SK-N-SH (cell line): ENCODE measurements at regions of chr19 and their contacts with region 1.

Region 1: DNA sequence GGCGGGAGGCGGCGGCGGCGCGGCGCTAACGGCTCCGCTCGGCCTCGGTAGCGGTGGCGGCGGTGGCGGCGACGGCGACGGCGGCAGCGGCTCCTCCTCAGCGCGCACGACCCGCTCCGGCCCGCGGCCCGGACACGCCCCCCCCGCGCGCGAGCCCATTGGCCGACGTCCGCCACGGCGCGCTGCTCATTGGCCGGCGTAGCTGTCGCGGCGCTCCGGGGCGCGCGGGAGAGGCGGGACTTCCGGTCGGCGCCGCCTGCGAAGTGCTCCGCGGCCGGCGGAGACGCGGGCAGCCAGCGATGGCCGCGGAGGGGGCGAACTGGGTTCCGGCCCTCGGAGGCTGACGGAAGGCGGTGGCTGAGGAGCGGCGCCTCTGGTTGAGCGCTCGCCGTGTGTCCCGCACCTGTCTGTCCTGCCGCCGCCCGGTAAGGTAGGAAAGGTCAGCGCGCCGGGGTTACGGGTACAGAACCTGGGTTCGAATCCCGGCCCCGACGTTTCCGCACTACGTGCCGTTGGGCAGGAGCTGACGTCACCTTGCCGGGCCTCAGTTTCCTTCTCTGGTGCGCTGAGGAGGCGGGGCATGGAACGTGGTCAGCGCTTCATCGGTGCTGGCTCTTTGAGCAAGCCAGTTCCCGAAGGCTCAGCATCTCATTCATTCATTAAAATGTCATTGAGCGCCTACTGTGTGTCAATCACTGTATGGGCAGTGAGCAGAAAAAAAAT is at the start of gene ELAVL1:
- DNase-seq: peak; percentile 98
- H3K4me3 ChIP-seq: peak within 1 kb of the TSS; percentile 71 to 90
- H3K27ac ChIP-seq: peak within 1 kb of the TSS; percentile 66 to 73
- H3K4me1 ChIP-seq: peaks cover 5 to 23% of the 10 kb centered on the region in 2 experiments; a peak in 2 of 4 replicates
- H3K27me3 ChIP-seq: no peaks in the 10 kb centered on the region
- CTCF ChIP-seq: no peak
- EP300 ChIP-seq: no peak
- RAD21 ChIP-seq: no peak
- polyA plus RNA-seq, gene ELAVL1: 41.7 and 49.6 TPM in 2 replicates

Region 2: GRCh38 chr19:7888145-7888825 is 117.4 kb before region 1 on chr19 and contains the start of gene LRRC8E:
- CTCF ChIA-PET with region 1: no interaction called
- POLR2A ChIA-PET with region 1: no interaction called
- DNase-seq: peak; percentile 24
- H3K4me3 ChIP-seq: no peak within 1 kb of the TSS
- H3K27ac ChIP-seq: no peak within 1 kb of the TSS
- H3K4me1 ChIP-seq: no peaks in the 10 kb centered on the region
- H3K27me3 ChIP-seq: no peaks in the 10 kb centered on the region; the same call in 1 of the 2 replicates
- CTCF ChIP-seq: no peak
- EP300 ChIP-seq: no peak
- RAD21 ChIP-seq: no peak
- polyA plus RNA-seq, gene LRRC8E: 0.02 and 0.23 TPM in 2 replicates

Region 3: GRCh38 chr19:7961921-7962626 is 43.6 kb before region 1 on chr19:
- CTCF ChIA-PET with region 1: interaction called, 11 read pairs
- POLR2A ChIA-PET with region 1: no interaction called
- DNase-seq: no peak
- H3K4me3 ChIP-seq: no peak overlapping the region
- H3K27ac ChIP-seq: no peak overlapping the region
- H3K4me1 ChIP-seq: no peaks in the 10 kb centered on the region
- H3K27me3 ChIP-seq: no peaks in the 10 kb centered on the region
- CTCF ChIP-seq: no peak
- EP300 ChIP-seq: no peak
- RAD21 ChIP-seq: no peak

Region 4: DNA sequence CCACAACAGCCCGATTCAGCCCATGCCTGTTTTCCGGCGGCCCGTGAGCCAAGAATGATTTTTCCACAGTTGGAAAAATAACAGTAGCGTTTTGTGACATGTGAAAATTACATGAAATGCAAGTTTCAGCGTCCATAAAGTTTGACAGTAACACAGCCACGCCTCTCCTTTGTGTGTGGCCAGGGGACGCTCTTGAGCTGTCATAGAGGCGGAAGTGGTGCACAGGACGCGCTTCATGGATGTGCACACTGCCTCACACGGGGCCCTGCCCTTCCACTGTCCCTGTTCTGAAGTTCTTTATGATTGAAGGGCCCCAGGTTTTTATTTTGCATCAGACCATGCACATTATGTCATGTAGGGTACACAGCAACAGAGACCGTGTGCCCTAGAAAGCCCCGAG is 12.1 kb after region 1 on chr19:
- CTCF ChIA-PET with region 1: interaction called, 18 read pairs
- POLR2A ChIA-PET with region 1: no interaction called
- DNase-seq: no peak
- H3K4me3 ChIP-seq: no peak overlapping the region
- H3K27ac ChIP-seq: no peak overlapping the region
- H3K4me1 ChIP-seq: no peaks in the 10 kb centered on the region
- H3K27me3 ChIP-seq: no peaks in the 10 kb centered on the region
- CTCF ChIP-seq: no peak
- EP300 ChIP-seq: no peak
- RAD21 ChIP-seq: peak; percentile 36

Region 5: DNA sequence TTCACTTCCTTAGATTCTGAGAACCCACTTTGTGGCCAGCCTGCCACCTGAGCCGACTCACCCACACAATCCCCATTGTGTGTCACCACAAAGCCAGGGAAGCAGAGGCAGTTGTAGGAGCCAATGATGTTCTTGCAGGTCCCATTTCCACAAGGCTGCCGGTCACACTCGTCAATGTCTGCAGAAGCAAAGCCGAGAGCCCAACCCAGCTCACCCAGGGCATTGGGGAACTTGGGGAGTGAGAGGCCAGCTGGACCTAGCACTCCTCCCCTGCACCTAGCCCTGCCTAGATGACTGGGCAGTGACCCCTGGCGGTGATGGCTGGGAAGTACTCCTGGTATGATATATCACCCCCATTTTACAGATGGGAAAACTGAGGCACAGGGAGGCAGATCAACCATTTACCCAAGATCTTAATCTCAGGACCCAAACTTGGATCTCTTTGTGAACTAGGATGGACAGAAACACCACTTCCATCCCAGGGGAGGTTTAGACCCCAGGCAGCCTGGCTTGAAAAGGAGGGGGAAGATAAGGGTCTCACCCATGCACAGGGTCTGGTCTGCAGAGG is 90.3 kb after region 1 on chr19:
- CTCF ChIA-PET with region 1: no interaction called
- POLR2A ChIA-PET with region 1: no interaction called
- DNase-seq: no peak
- H3K4me3 ChIP-seq: no peak overlapping the region
- H3K27ac ChIP-seq: no peak overlapping the region
- H3K4me1 ChIP-seq: no peaks in the 10 kb centered on the region
- H3K27me3 ChIP-seq: no peaks in the 10 kb centered on the region
- CTCF ChIP-seq: no peak
- EP300 ChIP-seq: no peak
- RAD21 ChIP-seq: no peak